HepG2 (cell line): ENCODE measurements at regions of chr19 and their contacts with region 1.

Region 1: DNA sequence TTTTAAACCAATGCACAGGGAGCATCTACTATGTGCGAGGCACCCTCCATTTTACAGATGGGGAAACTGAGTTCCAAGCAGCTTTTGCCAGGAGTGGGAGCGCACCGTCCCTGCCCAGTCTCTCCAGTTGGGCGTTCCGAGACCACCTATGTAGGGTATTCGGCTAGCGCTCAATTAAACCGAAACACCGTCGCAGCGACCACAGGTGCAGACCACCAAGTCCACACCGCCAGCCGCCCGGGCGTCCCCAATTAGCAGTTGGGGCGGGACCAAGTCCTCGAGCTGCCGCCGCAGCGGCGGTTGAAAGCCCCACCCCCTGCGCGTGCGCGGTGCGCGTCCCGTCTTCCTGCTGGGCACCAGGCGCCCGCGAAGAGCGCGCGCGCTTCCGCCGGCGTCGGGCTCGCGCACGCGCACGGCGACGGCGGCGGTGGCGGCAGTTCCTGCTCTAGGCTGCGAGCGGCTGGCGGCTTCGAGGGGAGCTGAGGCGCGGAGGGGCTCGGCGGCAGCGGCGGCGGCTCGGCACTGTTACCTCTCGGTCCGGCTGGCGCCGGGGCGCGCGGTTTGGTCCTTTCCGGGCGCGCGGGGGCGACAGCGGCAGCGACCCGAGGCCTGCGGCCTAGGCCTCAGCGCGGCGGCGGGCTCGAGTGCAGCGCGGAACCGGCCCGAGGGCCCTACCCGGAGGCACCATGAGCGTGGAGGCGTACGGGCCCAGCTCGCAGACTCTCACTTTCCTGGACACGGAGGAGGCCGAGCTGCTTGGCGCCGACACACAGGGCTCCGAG is at the start of gene UPF1:
- DNase-seq: peak; percentile 82
- ATAC-seq: peak; percentile 70
- H3K4me3 ChIP-seq: peak within 1 kb of the TSS; percentile 74 to 80 (median 80)
- H3K27ac ChIP-seq: peak within 1 kb of the TSS; percentile 75
- H3K4me1 ChIP-seq: peaks cover 42% of the 10 kb centered on the region
- H3K27me3 ChIP-seq: peaks cover 0 to 1% of the 10 kb centered on the region in 2 experiments; a peak in 1 of 5 replicates
- CTCF ChIP-seq: peak; percentile 10; the same call in 1 of the 2 replicates
- EP300 ChIP-seq: no peak
- POLR2A ChIP-seq: peak; percentile 54 to 88; a peak in 3 of 4 replicates
- RAD21 ChIP-seq: peak; percentile 9; the same call in 1 of the 2 replicates
- total RNA-seq, gene UPF1: 37.3 and 41.8 TPM in 2 replicates

Region 2: DNA sequence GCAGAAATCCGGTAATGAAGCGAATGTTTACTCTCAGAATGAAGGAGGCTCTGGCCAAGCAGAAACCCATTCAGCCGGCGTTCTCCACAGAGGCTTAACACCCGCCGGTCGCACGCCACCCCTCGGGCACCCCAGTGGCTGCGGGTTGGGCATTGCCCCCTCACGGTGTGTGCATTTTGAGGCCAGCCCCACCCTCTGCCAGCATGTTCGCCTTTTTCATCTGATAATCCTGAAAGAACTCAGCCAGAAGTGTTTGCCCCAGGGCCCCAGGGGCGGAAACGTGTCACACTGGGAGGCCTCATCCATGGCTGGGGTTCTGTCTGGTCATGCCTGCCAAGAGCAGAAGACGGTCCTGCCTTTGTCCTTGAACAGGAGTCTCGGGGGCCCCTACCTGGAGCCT is 74.8 kb before region 1 on chr19:
- CTCF ChIA-PET with region 1: no interaction called
- POLR2A ChIA-PET with region 1: no interaction called
- in situ Hi-C with region 1: no loop called
- intact Hi-C with region 1: no loop called
- DNase-seq: no peak
- ATAC-seq: no peak
- H3K4me3 ChIP-seq: no peak overlapping the region
- H3K27ac ChIP-seq: no peak overlapping the region
- H3K4me1 ChIP-seq: peaks cover 13% of the 10 kb centered on the region
- H3K27me3 ChIP-seq: no peaks in the 10 kb centered on the region
- CTCF ChIP-seq: no peak
- EP300 ChIP-seq: no peak
- POLR2A ChIP-seq: no peak
- RAD21 ChIP-seq: no peak

Region 3: DNA sequence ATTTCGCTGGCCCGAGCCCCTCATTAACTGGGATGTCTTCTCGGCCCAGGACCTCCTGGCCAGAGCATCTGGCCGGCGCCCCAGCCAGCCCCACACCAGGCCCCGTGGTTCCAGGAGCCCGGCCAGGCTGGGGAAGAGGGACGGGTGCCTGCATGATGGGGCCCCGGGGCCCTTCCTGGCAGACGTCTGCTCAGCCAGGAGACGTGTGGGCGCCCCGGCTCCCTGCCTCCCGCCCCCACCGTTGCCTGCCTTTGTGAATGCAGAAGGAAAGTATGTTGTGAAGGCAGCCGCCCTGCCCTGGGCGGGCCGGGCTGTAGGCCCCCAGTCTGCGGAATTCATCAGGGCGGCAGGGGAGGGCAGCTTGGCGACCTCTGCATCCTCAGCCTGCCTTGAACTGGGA is 36.2 kb before region 1 on chr19:
- CTCF ChIA-PET with region 1: no interaction called
- POLR2A ChIA-PET with region 1: interaction called, 4 read pairs
- in situ Hi-C with region 1: no loop called
- intact Hi-C with region 1: loop called (anchors 5 kb)
- DNase-seq: no peak
- ATAC-seq: peak; percentile 36
- H3K4me3 ChIP-seq: peak overlapping the region in 1 of 3 experiments; percentile 33; a peak in 1 of 6 replicates
- H3K27ac ChIP-seq: no peak overlapping the region
- H3K4me1 ChIP-seq: peaks cover 52% of the 10 kb centered on the region
- H3K27me3 ChIP-seq: peaks cover 8 to 51% of the 10 kb centered on the region in 2 experiments
- CTCF ChIP-seq: no peak
- EP300 ChIP-seq: no peak
- POLR2A ChIP-seq: no peak
- RAD21 ChIP-seq: no peak

Region 4: DNA sequence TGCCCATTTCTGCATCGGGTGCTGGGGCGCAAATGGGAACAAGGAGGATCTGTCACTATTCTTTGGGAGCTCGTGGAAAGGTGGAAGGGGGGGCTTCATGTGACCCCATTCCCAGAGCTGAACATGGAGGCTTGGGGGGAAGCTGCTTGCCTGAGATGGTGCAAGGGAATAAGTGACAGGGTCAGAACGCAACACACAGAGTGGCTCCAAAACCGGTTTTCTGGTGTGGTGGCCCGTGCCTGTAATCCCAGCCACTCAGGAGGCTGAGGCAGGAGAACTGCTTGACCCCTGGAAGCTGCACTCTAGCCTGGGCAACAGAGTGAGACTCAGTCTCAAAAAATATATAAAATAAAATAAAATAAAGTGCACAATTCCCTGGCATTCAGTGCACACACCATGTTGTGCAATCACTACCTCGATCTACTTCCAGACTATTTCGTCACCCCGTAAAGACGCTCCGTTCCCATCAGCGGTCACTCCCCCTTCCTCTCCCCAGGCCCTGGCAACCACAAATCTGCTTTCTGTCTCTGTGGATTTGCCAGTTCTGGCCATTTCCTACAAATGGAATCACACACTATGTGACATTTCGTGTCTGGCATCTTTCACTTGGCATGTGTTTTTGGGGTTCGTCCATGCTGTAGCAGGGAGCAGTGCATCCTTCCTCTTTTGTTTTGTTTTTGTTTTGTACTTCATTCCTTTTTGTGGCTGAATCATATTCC is 22.4 kb before region 1 on chr19:
- CTCF ChIA-PET with region 1: no interaction called
- POLR2A ChIA-PET with region 1: interaction called, 10 read pairs
- in situ Hi-C with region 1: no loop called
- intact Hi-C with region 1: no loop called
- DNase-seq: no peak
- ATAC-seq: no peak
- H3K4me3 ChIP-seq: no peak overlapping the region
- H3K27ac ChIP-seq: no peak overlapping the region
- H3K4me1 ChIP-seq: peaks cover 66% of the 10 kb centered on the region
- H3K27me3 ChIP-seq: peaks cover 8 to 28% of the 10 kb centered on the region in 2 experiments
- CTCF ChIP-seq: no peak
- EP300 ChIP-seq: no peak
- POLR2A ChIP-seq: no peak
- RAD21 ChIP-seq: no peak

Region 5: DNA sequence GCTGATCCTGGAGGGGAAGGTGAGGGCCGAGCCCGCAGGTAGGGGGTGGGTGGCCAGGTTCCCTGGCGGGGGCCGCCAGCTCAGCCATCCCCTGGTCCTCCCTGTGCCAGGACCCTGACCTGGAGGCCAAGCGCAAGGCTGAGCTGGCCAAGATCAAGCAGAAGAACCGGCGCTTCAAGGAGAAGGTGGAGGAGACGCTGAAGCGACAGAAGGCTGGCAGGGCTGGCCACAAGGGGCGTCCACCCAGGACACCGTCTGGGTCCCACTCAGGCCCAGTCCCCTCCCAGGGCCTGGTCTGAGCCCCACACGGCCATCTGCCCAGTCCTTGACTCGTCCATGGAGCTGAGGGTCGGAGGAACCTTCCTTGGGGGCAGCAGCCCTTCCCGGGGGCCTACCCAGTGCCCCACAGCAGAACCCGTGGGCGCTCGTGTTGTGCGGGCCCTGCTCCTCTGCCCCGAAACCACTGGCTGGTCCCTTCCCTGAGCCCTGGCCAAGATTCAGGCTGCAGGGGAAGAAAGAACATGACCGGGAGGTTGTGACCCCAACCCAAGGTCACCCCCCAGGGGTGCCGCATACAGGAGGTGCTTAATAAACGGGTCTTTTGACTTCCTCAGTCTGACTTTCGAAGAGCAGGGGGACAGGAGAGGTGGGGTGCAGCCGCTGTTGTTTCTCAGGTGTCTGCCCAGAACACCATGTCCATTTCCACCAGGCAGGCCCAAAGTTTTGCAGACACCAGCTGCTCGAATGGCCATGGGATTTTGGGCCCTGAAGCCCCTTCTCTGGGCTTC is 96.5 kb after region 1 on chr19:
- CTCF ChIA-PET with region 1: no interaction called
- POLR2A ChIA-PET with region 1: no interaction called
- in situ Hi-C with region 1: no loop called
- intact Hi-C with region 1: no loop called
- DNase-seq: no peak
- ATAC-seq: peak; percentile 16; the same call in 1 of the 3 replicates
- H3K4me3 ChIP-seq: no peak overlapping the region
- H3K27ac ChIP-seq: no peak overlapping the region
- H3K4me1 ChIP-seq: no peaks in the 10 kb centered on the region
- H3K27me3 ChIP-seq: no peaks in the 10 kb centered on the region
- CTCF ChIP-seq: no peak
- EP300 ChIP-seq: no peak
- POLR2A ChIP-seq: no peak
- RAD21 ChIP-seq: no peak